B cell (primary cell): ENCODE measurements at regions of chr4 and their contacts with region 1.

Region 1: DNA sequence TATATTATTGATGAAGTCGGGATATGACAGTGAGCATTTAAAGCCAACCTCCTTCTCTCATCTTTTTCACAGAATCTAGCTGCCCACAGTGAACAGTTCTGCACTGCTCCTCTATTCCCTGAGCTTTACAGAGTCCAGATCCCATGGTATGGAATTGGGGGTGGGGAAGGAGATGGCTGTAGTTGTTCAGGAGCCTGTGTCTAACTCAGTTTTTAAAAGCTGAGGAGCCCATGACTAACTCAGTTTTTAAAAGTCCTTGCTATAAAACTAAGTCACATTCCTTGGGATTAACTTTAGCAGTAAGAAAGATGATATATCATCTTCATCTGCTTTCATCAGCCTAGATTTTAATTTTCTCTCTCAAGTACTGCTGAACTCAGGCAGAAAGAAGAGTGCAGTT is 96.4 kb upstream of the STIM2 start:
- DNase-seq: no peak
- ATAC-seq: no peak
- H3K4me3 ChIP-seq: no peak overlapping the region
- H3K4me3 Mint-ChIP-seq: no peak overlapping the region
- H3K27ac ChIP-seq: no peak overlapping the region
- H3K27ac Mint-ChIP-seq: no peak overlapping the region
- H3K4me1 ChIP-seq: no peaks in the 10 kb centered on the region
- H3K4me1 Mint-ChIP-seq: peaks cover 3% of the 10 kb centered on the region
- H3K27me3 ChIP-seq: no peaks in the 10 kb centered on the region
- H3K27me3 Mint-ChIP-seq: no peaks in the 10 kb centered on the region
- CTCF ChIP-seq: no peak

Region 2: DNA sequence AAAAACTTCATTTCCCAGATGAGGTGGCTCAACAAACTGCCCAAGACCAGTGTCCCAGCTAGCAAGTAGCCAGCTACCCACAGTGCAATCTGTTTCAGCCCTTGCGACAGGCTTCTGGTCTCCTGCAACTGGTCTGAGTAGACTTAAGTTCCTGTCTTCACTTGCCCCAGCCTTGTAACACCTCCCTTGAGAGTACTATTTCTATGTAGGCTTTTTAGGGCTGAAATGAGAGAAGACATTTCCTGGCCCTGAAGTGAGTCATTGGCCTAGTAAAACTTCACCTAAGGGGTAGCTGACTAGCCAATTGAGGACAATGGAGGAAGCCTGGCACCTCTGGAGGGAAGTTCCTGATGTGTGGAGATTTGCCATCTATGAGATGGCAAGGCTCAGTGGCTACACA is 16.3 kb after region 1 on chr4:
- CTCF ChIA-PET with region 1: no interaction called
- POLR2A ChIA-PET with region 1: interaction called, 11 read pairs
- intact Hi-C with region 1: no loop called
- DNase-seq: no peak
- ATAC-seq: no peak
- H3K4me3 ChIP-seq: no peak overlapping the region
- H3K4me3 Mint-ChIP-seq: no peak overlapping the region
- H3K27ac ChIP-seq: no peak overlapping the region
- H3K27ac Mint-ChIP-seq: no peak overlapping the region
- H3K4me1 ChIP-seq: peaks cover 4 to 7% of the 10 kb centered on the region in 2 donors
- H3K4me1 Mint-ChIP-seq: peaks cover 12% of the 10 kb centered on the region
- H3K27me3 ChIP-seq: no peaks in the 10 kb centered on the region
- H3K27me3 Mint-ChIP-seq: no peaks in the 10 kb centered on the region
- CTCF ChIP-seq: no peak